H1 (cell line): ENCODE measurements at regions of chr20 and their contacts with region 1.

Region 1: DNA sequence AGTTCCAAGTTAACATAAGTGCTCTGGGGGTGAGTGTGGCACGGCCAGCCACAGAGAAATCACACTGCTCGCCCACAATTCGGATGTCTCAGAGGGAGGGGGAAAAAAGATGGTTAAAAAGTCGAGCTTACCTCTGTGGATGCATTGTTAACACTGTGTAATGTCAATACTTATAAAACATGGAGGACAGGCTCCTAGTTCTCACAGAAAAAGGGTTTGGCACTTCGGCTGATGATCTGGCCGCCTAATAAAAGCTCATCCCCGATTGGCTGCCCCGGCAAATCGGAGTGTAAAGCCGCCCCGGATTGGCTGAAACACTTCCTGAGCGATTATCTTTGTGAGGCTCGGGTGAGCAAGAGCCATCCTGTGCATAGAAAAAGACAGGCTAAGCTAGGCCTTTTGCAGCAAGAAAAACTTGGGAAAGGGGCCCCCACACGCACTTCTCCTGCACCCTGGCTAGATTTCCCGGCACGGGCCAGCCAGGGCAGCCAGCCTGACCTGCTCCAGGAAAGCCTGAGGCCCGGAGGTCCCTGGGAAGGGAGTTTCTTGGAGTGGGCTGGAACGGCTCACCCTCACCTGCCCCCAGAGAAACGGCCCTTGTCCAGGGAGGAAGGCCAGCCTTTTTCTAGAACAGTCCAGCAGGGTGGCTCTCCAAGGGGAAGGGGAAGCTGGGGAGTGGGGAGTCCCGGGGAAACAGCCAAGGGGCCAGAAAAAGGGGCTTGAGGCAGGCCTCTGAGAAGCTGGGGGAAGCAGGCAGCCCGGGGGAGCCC is at the start of gene ZMYND8:
- DNase-seq: peak; percentile 70 to 98
- H3K4me3 ChIP-seq: peak within 1 kb of the TSS in 2 of 4 experiments; percentile 6 to 37; a peak in 5 of 8 replicates
- H3K27ac ChIP-seq: peak within 1 kb of the TSS; percentile 98
- H3K4me1 ChIP-seq: peaks cover 72 to 86% (median 79%) of the 10 kb centered on the region in 4 experiments
- H3K27me3 ChIP-seq: no peaks in the 10 kb centered on the region
- CTCF ChIP-seq: no peak
- EP300 ChIP-seq: no peak
- POLR2A ChIP-seq: no peak; a peak in 1 of 3 replicates
- RAD21 ChIP-seq: no peak
- total RNA-seq, gene ZMYND8: 163 TPM in 2 replicates

Region 2: GRCh38 chr20:47338131-47338628 is 18.5 kb before region 1 on chr20:
- CTCF ChIA-PET with region 1: interaction called, 6 read pairs
- POLR2A ChIA-PET with region 1: interaction called, 24 read pairs
- DNase-seq: no peak
- H3K4me3 ChIP-seq: no peak overlapping the region
- H3K27ac ChIP-seq: peak overlapping the region; percentile 24; the same call in 1 of the 2 replicates
- H3K4me1 ChIP-seq: peaks cover 5 to 23% (median 14%) of the 10 kb centered on the region in 4 experiments; a peak in 6 of 7 replicates
- H3K27me3 ChIP-seq: no peaks in the 10 kb centered on the region
- CTCF ChIP-seq: no peak
- EP300 ChIP-seq: no peak
- POLR2A ChIP-seq: no peak
- RAD21 ChIP-seq: no peak

Region 3: DNA sequence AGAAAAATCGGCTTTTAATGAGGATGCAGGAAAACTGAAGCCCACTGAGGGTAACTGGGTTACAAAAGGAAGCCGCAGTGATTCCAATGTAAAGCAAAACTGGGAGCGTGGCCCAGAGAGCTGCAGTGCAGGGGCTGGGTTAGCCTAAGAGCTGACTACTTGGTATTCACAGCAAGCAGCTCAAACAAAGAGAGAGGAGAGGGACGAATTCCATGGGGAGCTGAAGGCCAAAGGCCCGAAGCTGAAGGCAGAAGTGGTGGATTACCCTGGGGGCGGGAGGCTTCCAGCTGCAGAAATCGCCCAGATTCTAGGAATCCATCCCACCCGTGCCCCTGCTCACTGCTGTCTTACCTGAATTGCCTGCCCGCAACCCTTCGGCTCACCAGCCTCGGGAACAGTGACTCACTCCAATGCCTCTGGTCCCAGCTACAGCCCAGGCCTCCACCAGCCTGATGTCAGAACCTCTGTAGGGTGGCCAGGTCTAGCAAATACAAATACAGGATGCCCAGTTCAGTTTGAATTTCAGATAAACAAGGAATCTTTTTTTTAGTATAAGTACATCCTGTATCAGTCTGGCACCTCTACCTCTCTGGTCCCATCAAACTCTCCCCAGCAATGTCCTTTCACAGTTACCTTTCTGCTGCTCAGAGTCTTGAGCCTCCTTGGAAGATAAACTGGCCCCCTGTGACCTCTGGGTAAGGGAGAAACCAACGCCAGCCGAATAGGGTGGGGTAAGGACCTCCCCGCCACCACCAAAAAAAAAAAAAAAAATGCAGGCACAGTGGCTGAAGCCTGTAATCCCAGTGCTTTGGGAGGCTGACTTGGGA is 14.4 kb after region 1 on chr20:
- CTCF ChIA-PET with region 1: interaction called, 17 read pairs
- POLR2A ChIA-PET with region 1: interaction called, 423 read pairs
- DNase-seq: no peak
- H3K4me3 ChIP-seq: no peak overlapping the region
- H3K27ac ChIP-seq: peak overlapping the region; percentile 71; the same call in 1 of the 2 replicates
- H3K4me1 ChIP-seq: peaks cover 4 to 17% (median 11%) of the 10 kb centered on the region in 4 experiments
- H3K27me3 ChIP-seq: no peaks in the 10 kb centered on the region
- CTCF ChIP-seq: no peak
- EP300 ChIP-seq: no peak
- POLR2A ChIP-seq: no peak
- RAD21 ChIP-seq: no peak; a peak in 1 of 4 replicates